Heart left ventricle (tissue), 16 donors: ENCODE measurements at regions of chr20 and their contacts with region 1.

Region 1: GRCh38 chr20:64269604-64270411 is 14.3 kb downstream of the PCMTD2 start:
- DNase-seq: no peak
- ATAC-seq: peak in 1 of 4 donors; percentile 57
- H3K4me3 ChIP-seq: no peak overlapping the region
- H3K27ac ChIP-seq: no peak overlapping the region
- H3K4me1 ChIP-seq: peaks cover 0 to 41% (median 15%) of the 10 kb centered on the region in 12 donors
- H3K27me3 ChIP-seq: no peaks in the 10 kb centered on the region
- CTCF ChIP-seq: no peak
- POLR2A ChIP-seq: no peak

Region 2: DNA sequence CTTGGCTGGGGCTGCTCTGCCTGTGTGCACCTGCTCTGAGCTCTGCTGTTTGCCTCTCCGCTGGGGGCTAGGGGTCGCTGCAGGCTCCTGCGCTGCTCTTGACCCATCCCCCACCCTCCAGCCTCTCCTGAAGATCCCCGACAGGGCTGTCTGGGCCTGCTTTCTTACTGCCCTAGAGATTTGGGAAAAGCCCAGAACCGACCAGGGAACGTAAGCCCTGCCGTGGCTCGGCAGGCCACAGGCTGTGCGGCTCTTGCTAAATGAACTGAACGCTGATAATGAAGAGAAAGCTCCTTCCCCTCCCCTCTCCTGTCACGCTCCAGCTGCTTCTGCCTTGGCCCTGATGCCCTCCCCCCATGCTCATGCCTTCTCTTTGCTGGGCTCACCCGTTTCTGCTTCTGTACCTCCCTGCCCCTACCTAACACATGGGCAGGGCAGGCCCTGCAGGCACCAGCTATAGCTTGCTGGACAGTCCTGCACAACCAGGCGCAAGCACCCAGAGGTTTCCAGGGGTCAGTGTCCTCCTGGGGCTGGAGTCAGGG is 46.2 kb before region 1 on chr20:
- intact Hi-C with region 1: loop called in 1 of 10 experiments (anchors 5 kb)
- DNase-seq: peak in 4 of 5 donors; percentile 58 to 74 (median 65)
- ATAC-seq: peak; percentile 63 to 77 (median 72)
- H3K4me3 ChIP-seq: no peak overlapping the region
- H3K27ac ChIP-seq: peak overlapping the region in 8 of 12 donors; percentile 40 to 73 (median 58)
- H3K4me1 ChIP-seq: peaks cover 0 to 42% (median 33%) of the 10 kb centered on the region in 12 donors
- H3K27me3 ChIP-seq: peaks cover 0 to 3% (median 0%) of the 10 kb centered on the region in 9 donors
- CTCF ChIP-seq: peak; percentile 16 to 58 (median 44)
- POLR2A ChIP-seq: no peak